Endothelial cell of umbilical vein (primary cell): ENCODE measurements at regions of chr1 and their contacts with region 1.

Region 1: GRCh38 chr1:43073490-43074230 is 98.4 kb downstream of the EBNA1BP2 start:
- DNase-seq: peak; percentile 79
- H3K4me3 ChIP-seq: no peak overlapping the region
- H3K27ac ChIP-seq: no peak overlapping the region
- H3K4me1 ChIP-seq: no peaks in the 10 kb centered on the region
- H3K27me3 ChIP-seq: no peaks in the 10 kb centered on the region
- CTCF ChIP-seq: peak; percentile 75 to 83
- POLR2A ChIP-seq: no peak

Region 2: GRCh38 chr1:42777852-42778251 is 295.8 kb before region 1 on chr1:
- CTCF ChIA-PET with region 1: interaction called, 244 read pairs
- POLR2A ChIA-PET with region 1: no interaction called
- dilution Hi-C with region 1: no loop called
- intact Hi-C with region 1: loop called (anchors 1 kb)
- DNase-seq: peak; percentile 54
- H3K4me3 ChIP-seq: no peak overlapping the region
- H3K27ac ChIP-seq: no peak overlapping the region
- H3K4me1 ChIP-seq: no peaks in the 10 kb centered on the region
- H3K27me3 ChIP-seq: no peaks in the 10 kb centered on the region
- CTCF ChIP-seq: peak; percentile 59 to 67
- POLR2A ChIP-seq: no peak

Region 3: DNA sequence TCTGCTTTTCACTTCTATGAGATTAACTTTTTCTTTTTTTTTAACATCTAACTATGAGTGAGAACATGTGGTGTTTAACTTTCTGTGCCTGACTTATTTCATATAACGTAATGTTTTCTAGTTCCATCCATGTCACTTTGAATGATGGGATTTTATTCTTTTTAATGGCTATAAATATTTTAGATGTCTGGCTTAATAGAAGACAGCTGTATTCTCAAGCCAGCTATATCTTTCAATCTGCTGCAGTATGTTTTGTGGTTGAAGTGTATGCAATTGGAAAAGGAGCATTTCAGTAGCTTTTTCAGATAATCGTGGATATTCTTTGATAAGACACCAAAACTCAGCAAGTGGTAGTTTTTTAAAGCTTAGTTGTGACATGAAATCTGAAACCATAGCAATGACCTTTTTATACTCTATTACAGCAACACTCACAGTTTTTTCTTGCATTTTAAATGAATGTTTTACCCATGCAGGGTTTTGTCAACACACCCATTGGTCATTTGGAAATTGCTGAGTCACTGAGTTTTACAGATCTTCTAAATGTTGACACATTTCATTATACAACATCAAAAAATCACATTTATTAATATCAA is 250.8 kb before region 1 on chr1:
- CTCF ChIA-PET with region 1: interaction called, 17 read pairs
- POLR2A ChIA-PET with region 1: no interaction called
- dilution Hi-C with region 1: no loop called
- intact Hi-C with region 1: no loop called
- DNase-seq: no peak
- H3K4me3 ChIP-seq: no peak overlapping the region
- H3K27ac ChIP-seq: no peak overlapping the region
- H3K4me1 ChIP-seq: peaks cover under 1% of the 10 kb centered on the region
- H3K27me3 ChIP-seq: no peaks in the 10 kb centered on the region
- CTCF ChIP-seq: no peak
- POLR2A ChIP-seq: no peak

Region 4: DNA sequence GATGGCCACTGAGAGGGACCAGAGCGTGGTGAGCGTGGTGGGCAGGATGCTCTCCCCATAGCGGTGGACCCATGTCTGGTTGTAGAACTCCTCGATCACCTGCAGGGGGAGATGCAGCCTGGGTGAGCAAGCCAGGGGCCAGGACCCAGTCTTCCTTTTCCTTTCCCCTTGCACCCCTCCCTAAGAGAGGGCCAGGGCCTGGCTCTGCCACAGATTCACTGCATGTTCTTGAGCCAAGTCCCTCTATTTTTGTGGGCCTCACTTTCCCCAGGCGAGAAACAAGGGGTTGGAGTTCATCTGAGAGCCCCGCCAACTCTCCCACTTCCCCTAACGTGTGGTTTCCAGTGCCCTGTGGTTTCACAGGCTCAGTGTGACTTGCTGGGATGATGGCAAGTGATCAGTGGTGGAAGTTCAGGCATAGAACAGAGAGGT is 142.5 kb before region 1 on chr1:
- CTCF ChIA-PET with region 1: interaction called, 23 read pairs
- POLR2A ChIA-PET with region 1: no interaction called
- dilution Hi-C with region 1: no loop called
- intact Hi-C with region 1: loop called (anchors 1 kb)
- DNase-seq: peak; percentile 16
- H3K4me3 ChIP-seq: no peak overlapping the region
- H3K27ac ChIP-seq: no peak overlapping the region
- H3K4me1 ChIP-seq: peaks cover 3% of the 10 kb centered on the region
- H3K27me3 ChIP-seq: no peaks in the 10 kb centered on the region
- CTCF ChIP-seq: peak; percentile 57 to 65
- POLR2A ChIP-seq: no peak

Region 5: GRCh38 chr1:42973304-42973703 is 100.4 kb before region 1 on chr1:
- CTCF ChIA-PET with region 1: interaction called, 18 read pairs
- POLR2A ChIA-PET with region 1: no interaction called
- dilution Hi-C with region 1: no loop called
- intact Hi-C with region 1: loop called (anchors 5 kb)
- DNase-seq: no peak
- H3K4me3 ChIP-seq: no peak overlapping the region
- H3K27ac ChIP-seq: no peak overlapping the region
- H3K4me1 ChIP-seq: peaks cover 3% of the 10 kb centered on the region
- H3K27me3 ChIP-seq: no peaks in the 10 kb centered on the region
- CTCF ChIP-seq: no peak
- POLR2A ChIP-seq: no peak

Region 6: DNA sequence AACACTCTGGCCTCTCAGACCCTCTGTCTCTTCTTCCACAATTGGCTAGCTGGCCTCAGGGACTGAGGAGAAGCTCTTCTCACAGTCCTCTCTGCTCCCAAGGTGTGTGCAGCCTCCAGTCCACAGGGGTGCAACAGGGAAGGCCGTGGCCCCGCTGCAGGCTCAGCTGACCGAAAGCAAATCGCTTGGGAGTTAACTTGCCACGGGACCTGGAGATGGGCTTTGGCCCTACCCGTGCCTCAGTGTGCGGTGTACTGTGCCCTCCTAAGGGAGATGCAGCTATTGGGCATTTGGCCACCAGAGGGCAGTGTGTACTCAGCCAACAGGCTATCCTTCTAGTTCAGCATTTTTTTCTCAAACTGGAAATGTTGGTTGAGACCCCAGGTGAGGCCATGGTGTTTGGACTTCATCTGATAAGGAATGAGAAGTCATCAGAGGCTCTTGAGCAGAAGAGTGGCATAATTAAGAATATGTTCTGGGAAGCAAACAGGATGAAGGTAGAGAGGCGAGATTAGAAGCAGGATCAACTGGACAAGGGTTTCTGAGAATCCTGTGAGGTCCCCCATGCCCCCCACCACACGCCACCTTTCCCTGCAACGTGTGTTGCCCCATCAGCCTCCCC is 153.6 kb after region 1 on chr1:
- CTCF ChIA-PET with region 1: interaction called, 16 read pairs
- POLR2A ChIA-PET with region 1: no interaction called
- dilution Hi-C with region 1: no loop called
- intact Hi-C with region 1: no loop called
- DNase-seq: peak; percentile 78
- H3K4me3 ChIP-seq: no peak overlapping the region
- H3K27ac ChIP-seq: no peak overlapping the region
- H3K4me1 ChIP-seq: peaks cover 7% of the 10 kb centered on the region
- H3K27me3 ChIP-seq: no peaks in the 10 kb centered on the region
- CTCF ChIP-seq: peak; percentile 84 to 97
- POLR2A ChIP-seq: no peak